Activated naive CD4-positive, alpha-beta T cell treated with anti-CD3 and anti-CD28 coated beads for 36 hours (primary cell): ENCODE measurements at regions of chr17 and their contacts with region 1.

Region 1: GRCh38 chr17:35531160-35531559 is 6.3 kb downstream of the SLFN12L start:
- DNase-seq: no peak
- H3K4me3 Mint-ChIP-seq: no peak overlapping the region
- H3K27ac Mint-ChIP-seq: no peak overlapping the region
- H3K4me1 Mint-ChIP-seq: peaks cover 72% of the 10 kb centered on the region
- H3K27me3 Mint-ChIP-seq: no peaks in the 10 kb centered on the region

Region 2: GRCh38 chr17:35514564-35514963 is 16.6 kb before region 1 on chr17:
- CTCF ChIA-PET with region 1: no interaction called
- intact Hi-C with region 1: loop called (anchors 2 kb)
- DNase-seq: no peak
- H3K4me3 Mint-ChIP-seq: no peak overlapping the region
- H3K27ac Mint-ChIP-seq: no peak overlapping the region
- H3K4me1 Mint-ChIP-seq: peaks cover 66% of the 10 kb centered on the region
- H3K27me3 Mint-ChIP-seq: no peaks in the 10 kb centered on the region